GM13977 (cell line): ENCODE measurements at regions of chr13 and their contacts with region 1.

Region 1: DNA sequence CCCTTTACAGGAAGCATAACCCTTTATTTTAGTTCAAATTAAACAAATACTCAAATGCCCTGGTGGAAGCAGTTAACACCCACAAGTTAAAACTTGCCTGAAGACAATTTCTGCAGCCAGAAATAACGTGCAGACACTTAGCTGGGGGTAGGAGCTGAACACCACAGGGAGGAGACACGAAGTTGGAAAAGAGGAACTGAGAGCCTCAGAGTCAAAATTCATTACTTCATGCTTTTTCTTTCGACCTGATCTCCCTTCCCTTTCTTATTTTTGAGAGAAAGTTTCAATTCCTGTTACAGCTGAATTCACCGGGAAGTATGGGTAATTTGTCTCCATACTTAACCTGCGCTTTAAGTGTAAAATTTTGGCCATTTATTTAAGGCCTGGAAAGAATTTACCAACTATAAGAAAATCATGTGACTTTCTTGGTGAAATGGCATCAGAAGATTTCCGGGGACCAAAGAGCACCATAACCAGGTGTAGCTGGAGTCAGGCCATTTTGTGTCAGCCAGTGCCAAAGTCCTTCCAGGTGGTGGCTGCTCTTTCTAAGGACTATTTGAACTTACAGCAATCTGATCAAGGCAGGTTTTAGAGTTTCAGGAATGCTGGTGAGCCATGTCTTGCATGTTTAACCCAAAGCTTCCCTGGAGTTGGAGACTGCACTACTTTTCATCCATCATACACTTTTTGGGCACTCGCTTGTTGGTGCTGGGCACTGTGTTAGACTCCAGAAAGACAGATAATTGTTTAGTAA is 46.5 kb upstream of the RCBTB2 start:
- DNase-seq: peak; percentile 53
- CTCF ChIP-seq: no peak

Region 2: GRCh38 chr13:48400850-48401291 is 178.5 kb before region 1 on chr13:
- in situ Hi-C with region 1: loop called (anchors 5 kb)
- DNase-seq: no peak
- CTCF ChIP-seq: no peak

Region 3: GRCh38 chr13:48492470-48493065 is 86.8 kb before region 1 on chr13:
- in situ Hi-C with region 1: loop called (anchors 5 kb)
- DNase-seq: peak; percentile 52
- CTCF ChIP-seq: no peak

Region 4: GRCh38 chr13:49606747-49607648 is 1027.7 kb after region 1 on chr13:
- in situ Hi-C with region 1: no loop called
- DNase-seq: peak; percentile 76
- CTCF ChIP-seq: peak; percentile 83